Mammary epithelial cell (primary cell): ENCODE measurements at regions of chr1 and their contacts with region 1.

Region 1: DNA sequence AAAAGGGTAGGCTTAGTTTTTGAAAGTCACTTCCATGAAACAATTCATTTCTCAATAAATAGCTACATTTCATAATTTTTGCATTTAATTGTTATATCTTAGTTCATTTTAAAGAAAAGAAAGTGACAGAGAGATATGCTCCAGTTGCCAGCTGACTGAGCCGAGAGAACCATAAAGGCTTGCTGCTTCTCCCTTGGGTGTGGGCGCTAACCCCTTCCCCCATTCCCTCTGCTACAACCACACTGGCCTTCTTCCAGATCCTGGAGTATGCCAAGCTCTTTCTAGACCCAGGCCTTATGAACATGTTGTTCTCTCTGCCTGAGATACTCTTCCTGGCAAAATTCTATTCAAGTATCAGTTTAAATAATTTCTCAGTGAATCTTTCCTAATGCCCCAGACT is 12.3 kb downstream of the SORT1 start:
- DNase-seq: no peak
- H3K4me3 ChIP-seq: no peak overlapping the region
- H3K27ac ChIP-seq: no peak overlapping the region
- H3K4me1 ChIP-seq: no peaks in the 10 kb centered on the region
- H3K27me3 ChIP-seq: no peaks in the 10 kb centered on the region
- CTCF ChIP-seq: no peak

Region 2: GRCh38 chr1:109298666-109299557 is 86.5 kb before region 1 on chr1:
- CTCF ChIA-PET with region 1: interaction called, 4 read pairs
- dilution Hi-C with region 1: no loop called
- in situ Hi-C with region 1: loop called in 1 of 2 experiments (anchors 10 kb)
- intact Hi-C with region 1: no loop called
- DNase-seq: peak; percentile 52
- H3K4me3 ChIP-seq: no peak overlapping the region
- H3K27ac ChIP-seq: peak overlapping the region; percentile 50
- H3K4me1 ChIP-seq: peaks cover 38% of the 10 kb centered on the region
- H3K27me3 ChIP-seq: no peaks in the 10 kb centered on the region
- CTCF ChIP-seq: no peak

Region 3: GRCh38 chr1:109350655-109351054 is 34.8 kb before region 1 on chr1:
- CTCF ChIA-PET with region 1: no interaction called
- dilution Hi-C with region 1: loop called (anchors 5 kb)
- in situ Hi-C with region 1: no loop called
- intact Hi-C with region 1: no loop called
- DNase-seq: no peak
- H3K4me3 ChIP-seq: no peak overlapping the region
- H3K27ac ChIP-seq: no peak overlapping the region
- H3K4me1 ChIP-seq: no peaks in the 10 kb centered on the region
- H3K27me3 ChIP-seq: no peaks in the 10 kb centered on the region
- CTCF ChIP-seq: no peak